Endothelial cell of umbilical vein (primary cell): ENCODE measurements at regions of chr6 and their contacts with region 1.

Region 1: DNA sequence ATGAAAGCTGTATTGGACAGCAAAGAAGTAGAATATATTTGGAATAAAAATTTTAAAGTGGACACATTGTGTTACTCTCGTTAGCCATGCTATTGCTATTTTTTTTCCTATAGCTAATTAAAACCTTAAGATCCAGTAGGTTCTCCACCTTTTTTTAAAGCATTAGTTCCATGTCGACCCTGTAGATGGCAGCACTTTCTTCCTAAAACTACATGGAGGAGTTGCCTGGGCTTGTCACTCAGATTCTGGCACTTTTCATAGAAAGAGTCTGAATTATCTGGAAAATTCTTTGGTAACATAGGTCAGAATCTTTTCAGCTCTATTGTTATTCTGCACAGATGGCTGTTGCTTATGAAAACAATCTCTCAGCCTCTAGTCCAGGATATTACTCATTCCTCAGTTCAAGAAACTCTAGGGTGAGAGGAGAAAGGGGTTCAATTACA is 42.0 kb upstream of the ESR1 start:
- DNase-seq: peak; percentile 98
- H3K4me3 ChIP-seq: no peak overlapping the region
- H3K27ac ChIP-seq: peak overlapping the region; percentile 74
- H3K4me1 ChIP-seq: peaks cover 22% of the 10 kb centered on the region
- H3K27me3 ChIP-seq: no peaks in the 10 kb centered on the region
- CTCF ChIP-seq: peak; percentile 50 to 59
- POLR2A ChIP-seq: no peak

Region 2: DNA sequence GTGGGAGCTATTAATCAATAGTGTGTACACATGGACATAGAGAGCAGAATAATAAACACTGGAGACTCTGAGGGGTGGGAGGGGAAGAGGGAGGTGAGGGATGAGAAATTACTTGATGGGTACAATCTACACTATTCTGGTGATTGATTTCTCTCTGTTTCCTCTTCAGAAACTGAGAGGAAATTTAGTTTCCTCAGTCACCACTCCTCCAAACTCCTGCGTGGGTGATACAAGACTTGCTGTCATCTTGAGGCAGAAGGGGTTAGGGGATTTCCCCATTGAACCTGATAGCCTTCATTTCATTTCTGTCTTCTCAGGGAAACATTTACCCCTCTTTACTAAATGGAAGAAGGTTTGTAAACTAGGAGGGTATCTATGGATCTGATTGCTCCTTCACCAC is 42.3 kb before region 1 on chr6:
- CTCF ChIA-PET with region 1: no interaction called
- POLR2A ChIA-PET with region 1: no interaction called
- dilution Hi-C with region 1: no loop called
- intact Hi-C with region 1: no loop called
- DNase-seq: no peak
- H3K4me3 ChIP-seq: no peak overlapping the region
- H3K27ac ChIP-seq: no peak overlapping the region
- H3K4me1 ChIP-seq: no peaks in the 10 kb centered on the region
- H3K27me3 ChIP-seq: peaks cover 2% of the 10 kb centered on the region in 2 experiments
- CTCF ChIP-seq: no peak
- POLR2A ChIP-seq: no peak

Region 3: GRCh38 chr6:151782560-151782959 is 17.1 kb after region 1 on chr6:
- CTCF ChIA-PET with region 1: no interaction called
- POLR2A ChIA-PET with region 1: no interaction called
- dilution Hi-C with region 1: no loop called
- intact Hi-C with region 1: no loop called
- DNase-seq: no peak
- H3K4me3 ChIP-seq: no peak overlapping the region
- H3K27ac ChIP-seq: no peak overlapping the region
- H3K4me1 ChIP-seq: no peaks in the 10 kb centered on the region
- H3K27me3 ChIP-seq: no peaks in the 10 kb centered on the region
- CTCF ChIP-seq: no peak
- POLR2A ChIP-seq: no peak

Region 4: GRCh38 chr6:151807533-151808370 is 42.3 kb after region 1 on chr6 and contains the start of gene ESR1:
- CTCF ChIA-PET with region 1: interaction called, 4 read pairs
- POLR2A ChIA-PET with region 1: no interaction called
- dilution Hi-C with region 1: no loop called
- intact Hi-C with region 1: loop called (anchors 2 kb)
- DNase-seq: peak; percentile 20
- H3K4me3 ChIP-seq: peak within 1 kb of the TSS in 2 of 3 experiments; percentile 24 to 30
- H3K27ac ChIP-seq: no peak within 1 kb of the TSS
- H3K4me1 ChIP-seq: peaks cover 11% of the 10 kb centered on the region
- H3K27me3 ChIP-seq: peaks cover 52 to 80% of the 10 kb centered on the region in 2 experiments
- CTCF ChIP-seq: no peak
- POLR2A ChIP-seq: no peak
- total RNA-seq, gene ESR1: not detected in 2 replicates

Region 5: GRCh38 chr6:152094992-152095592 is 329.6 kb after region 1 on chr6:
- CTCF ChIA-PET with region 1: interaction called, 13 read pairs
- POLR2A ChIA-PET with region 1: interaction called, 3 read pairs
- dilution Hi-C with region 1: no loop called
- intact Hi-C with region 1: loop called (anchors 1 kb)
- DNase-seq: peak; percentile 97
- H3K4me3 ChIP-seq: no peak overlapping the region
- H3K27ac ChIP-seq: peak overlapping the region; percentile 74
- H3K4me1 ChIP-seq: peaks cover 42% of the 10 kb centered on the region
- H3K27me3 ChIP-seq: no peaks in the 10 kb centered on the region
- CTCF ChIP-seq: no peak
- POLR2A ChIP-seq: no peak

Region 6: GRCh38 chr6:152124429-152125074 is 359.1 kb after region 1 on chr6:
- CTCF ChIA-PET with region 1: interaction called, 178 read pairs
- POLR2A ChIA-PET with region 1: no interaction called
- dilution Hi-C with region 1: no loop called
- intact Hi-C with region 1: loop called (anchors 1 kb)
- DNase-seq: peak; percentile 81
- H3K4me3 ChIP-seq: no peak overlapping the region
- H3K27ac ChIP-seq: no peak overlapping the region
- H3K4me1 ChIP-seq: peaks cover 1% of the 10 kb centered on the region
- H3K27me3 ChIP-seq: no peaks in the 10 kb centered on the region
- CTCF ChIP-seq: peak; percentile 53 to 55
- POLR2A ChIP-seq: no peak

Region 7: DNA sequence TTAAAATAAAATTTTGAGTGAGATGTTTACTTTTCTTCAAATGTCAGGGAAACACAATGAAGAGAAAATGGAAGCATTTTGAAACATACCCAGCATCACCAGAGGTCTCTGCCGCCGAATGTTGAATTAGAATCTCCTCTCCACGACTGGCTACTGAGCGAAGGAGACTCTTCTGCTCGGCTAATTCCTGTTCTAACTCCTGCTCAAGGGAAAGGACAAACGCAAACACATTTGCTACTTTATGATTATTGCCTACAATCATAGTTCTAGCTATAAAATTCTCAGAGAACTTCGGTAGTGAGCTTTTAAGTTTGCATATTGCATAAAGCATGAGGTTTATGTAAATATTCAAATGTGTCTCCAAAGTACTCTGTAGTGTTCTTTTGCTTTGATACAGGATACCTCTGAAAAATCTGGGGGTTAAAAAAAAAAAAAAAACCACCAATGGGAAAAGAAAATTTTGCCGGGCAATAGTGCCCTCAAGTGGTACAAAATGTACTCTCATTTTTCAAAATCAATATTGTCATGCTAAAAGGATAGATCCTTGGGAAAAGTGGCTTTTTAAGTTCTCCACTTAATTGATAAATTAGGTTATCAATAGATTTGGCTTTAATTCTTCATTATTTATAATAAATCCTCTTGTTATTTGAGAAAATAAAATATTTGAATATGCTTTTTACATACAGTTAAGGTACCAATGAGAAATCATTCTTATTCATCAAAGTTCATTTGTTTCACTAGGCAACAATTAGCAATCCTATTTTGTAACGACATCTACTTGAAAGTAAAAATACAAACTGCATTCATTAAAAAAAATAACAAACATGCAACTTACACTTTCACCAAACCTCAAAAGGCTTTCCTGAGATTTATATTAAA is 502.7 kb after region 1 on chr6:
- CTCF ChIA-PET with region 1: interaction called, 23 read pairs
- POLR2A ChIA-PET with region 1: no interaction called
- dilution Hi-C with region 1: no loop called
- intact Hi-C with region 1: loop called (anchors 1 kb)
- DNase-seq: peak; percentile 52
- H3K4me3 ChIP-seq: no peak overlapping the region
- H3K27ac ChIP-seq: no peak overlapping the region
- H3K4me1 ChIP-seq: no peaks in the 10 kb centered on the region
- H3K27me3 ChIP-seq: no peaks in the 10 kb centered on the region
- CTCF ChIP-seq: peak; percentile 25 to 26
- POLR2A ChIP-seq: no peak

Region 8: GRCh38 chr6:152669895-152670294 is 904.4 kb after region 1 on chr6:
- CTCF ChIA-PET with region 1: no interaction called
- POLR2A ChIA-PET with region 1: no interaction called
- dilution Hi-C with region 1: no loop called
- intact Hi-C with region 1: loop called (anchors 1 kb)
- DNase-seq: peak; percentile 67
- H3K4me3 ChIP-seq: no peak overlapping the region
- H3K27ac ChIP-seq: no peak overlapping the region
- H3K4me1 ChIP-seq: peaks cover 44% of the 10 kb centered on the region
- H3K27me3 ChIP-seq: no peaks in the 10 kb centered on the region
- CTCF ChIP-seq: peak; percentile 8 to 22
- POLR2A ChIP-seq: no peak